ENCODE measurements at regions of chr14 and their contacts with region 1.

Region 1: GRCh38 chr14:93033983-93034670 is 81.6 kb downstream of the ITPK1 start:
- DNase-seq: peak; percentile 68
- ATAC-seq: peak; percentile 69
- H3K4me3 ChIP-seq: peak overlapping the region in 2 of 5 experiments; percentile 12 to 36
- H3K4me3 Mint-ChIP-seq: peak overlapping the region; percentile 76
- H3K27ac ChIP-seq: peak overlapping the region; percentile 61 to 84
- H3K27ac Mint-ChIP-seq: peak overlapping the region; percentile 90
- H3K4me1 ChIP-seq: peaks cover 34 to 64% of the 10 kb centered on the region in 2 donors
- H3K4me1 Mint-ChIP-seq: peaks cover 58% of the 10 kb centered on the region
- H3K27me3 ChIP-seq: no peaks in the 10 kb centered on the region
- H3K27me3 Mint-ChIP-seq: no peaks in the 10 kb centered on the region
- CTCF ChIP-seq: peak; percentile 68

Region 2: DNA sequence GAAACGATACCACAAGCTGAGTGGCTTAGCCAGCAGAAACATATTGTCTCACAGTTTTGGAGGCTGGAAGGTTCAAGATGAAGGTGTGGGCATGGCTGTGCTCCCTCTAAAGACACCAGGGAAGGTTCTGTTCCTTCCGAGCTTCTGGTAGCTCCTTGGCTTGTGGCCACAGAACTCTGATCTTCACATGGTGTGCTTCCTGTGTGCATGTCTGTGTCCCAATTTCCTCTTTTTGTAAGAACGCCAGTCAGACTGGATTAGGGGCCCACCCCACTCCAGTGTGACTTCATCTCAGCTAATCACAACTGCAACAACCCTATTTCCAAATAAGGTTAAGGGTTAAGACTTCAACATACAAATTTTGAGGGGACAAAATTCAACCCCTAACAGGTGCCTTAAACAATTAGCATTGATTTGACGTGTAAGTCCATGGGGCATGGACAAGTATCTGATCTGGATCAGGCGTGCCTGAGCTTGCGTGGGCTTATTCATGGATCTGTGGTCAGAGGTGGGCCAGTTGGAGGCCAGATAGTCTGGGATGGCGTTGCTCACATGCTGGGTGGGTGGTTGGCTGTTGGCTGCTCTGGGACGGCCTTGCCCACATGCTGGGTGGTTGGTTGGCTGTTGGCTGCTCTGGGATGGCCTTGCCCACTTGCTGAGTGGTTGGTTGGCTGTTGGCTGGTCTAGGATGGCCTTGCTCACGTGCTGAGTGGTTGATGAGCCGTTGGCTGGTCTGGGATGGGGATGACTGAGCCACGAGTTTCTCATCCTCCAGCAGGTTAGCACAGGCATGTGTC is 374.2 kb before region 1 on chr14:
- CTCF ChIA-PET with region 1: no interaction called
- POLR2A ChIA-PET with region 1: no interaction called
- intact Hi-C with region 1: no loop called
- DNase-seq: peak; percentile 69
- ATAC-seq: peak; percentile 69
- H3K4me3 ChIP-seq: no peak overlapping the region
- H3K4me3 Mint-ChIP-seq: peak overlapping the region; percentile 79
- H3K27ac ChIP-seq: peak overlapping the region; percentile 30 to 78
- H3K27ac Mint-ChIP-seq: peak overlapping the region; percentile 76
- H3K4me1 ChIP-seq: peaks cover 65 to 90% of the 10 kb centered on the region in 2 donors
- H3K4me1 Mint-ChIP-seq: peaks cover 89% of the 10 kb centered on the region
- H3K27me3 ChIP-seq: no peaks in the 10 kb centered on the region
- H3K27me3 Mint-ChIP-seq: no peaks in the 10 kb centered on the region
- CTCF ChIP-seq: no peak

Region 3: DNA sequence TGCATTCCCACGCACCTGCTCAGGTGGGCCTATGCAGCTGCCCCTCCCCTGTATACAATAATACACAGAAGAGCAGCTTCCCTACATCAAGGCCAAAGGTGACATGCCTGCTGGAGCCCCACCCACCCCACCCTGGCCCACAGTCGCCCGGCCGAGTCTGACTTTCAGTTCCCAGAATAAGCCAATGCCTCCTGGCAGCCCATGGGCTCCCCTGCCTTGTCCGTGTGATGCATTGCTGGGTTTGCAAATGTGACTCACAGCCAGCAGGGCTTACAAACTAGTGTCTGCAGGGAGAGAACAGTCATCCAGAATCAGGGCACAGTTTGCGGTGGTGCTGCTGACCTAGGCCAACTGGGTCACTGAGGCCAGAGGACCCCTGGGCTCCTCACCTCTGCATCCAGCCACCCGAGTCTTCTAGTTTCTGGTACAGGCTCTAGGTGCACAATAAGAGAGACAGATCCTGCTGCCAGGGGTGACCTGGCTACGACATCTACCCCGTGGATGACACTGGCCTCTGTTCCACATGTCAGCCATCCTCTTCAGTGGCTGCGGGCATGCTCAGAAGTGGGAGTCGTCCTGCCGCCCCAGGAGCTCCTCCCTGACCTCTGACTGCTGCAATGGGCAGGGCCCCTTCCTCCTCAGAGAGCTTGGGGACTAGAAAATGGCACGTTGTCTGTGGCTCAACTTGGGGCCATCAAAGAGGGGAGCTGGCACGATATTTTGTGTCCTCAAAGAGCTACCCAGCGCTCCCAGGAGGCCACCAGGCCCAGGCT is 26.7 kb before region 1 on chr14:
- CTCF ChIA-PET with region 1: interaction called, 3 read pairs
- POLR2A ChIA-PET with region 1: no interaction called
- intact Hi-C with region 1: loop called (anchors 1 kb)
- DNase-seq: peak; percentile 55
- ATAC-seq: peak; percentile 91
- H3K4me3 ChIP-seq: no peak overlapping the region
- H3K4me3 Mint-ChIP-seq: peak overlapping the region; percentile 65
- H3K27ac ChIP-seq: peak overlapping the region; percentile 18 to 42
- H3K27ac Mint-ChIP-seq: peak overlapping the region; percentile 91
- H3K4me1 ChIP-seq: peaks cover 20 to 30% of the 10 kb centered on the region in 2 donors
- H3K4me1 Mint-ChIP-seq: peaks cover 34% of the 10 kb centered on the region
- H3K27me3 ChIP-seq: no peaks in the 10 kb centered on the region
- H3K27me3 Mint-ChIP-seq: no peaks in the 10 kb centered on the region
- CTCF ChIP-seq: no peak

Region 4: DNA sequence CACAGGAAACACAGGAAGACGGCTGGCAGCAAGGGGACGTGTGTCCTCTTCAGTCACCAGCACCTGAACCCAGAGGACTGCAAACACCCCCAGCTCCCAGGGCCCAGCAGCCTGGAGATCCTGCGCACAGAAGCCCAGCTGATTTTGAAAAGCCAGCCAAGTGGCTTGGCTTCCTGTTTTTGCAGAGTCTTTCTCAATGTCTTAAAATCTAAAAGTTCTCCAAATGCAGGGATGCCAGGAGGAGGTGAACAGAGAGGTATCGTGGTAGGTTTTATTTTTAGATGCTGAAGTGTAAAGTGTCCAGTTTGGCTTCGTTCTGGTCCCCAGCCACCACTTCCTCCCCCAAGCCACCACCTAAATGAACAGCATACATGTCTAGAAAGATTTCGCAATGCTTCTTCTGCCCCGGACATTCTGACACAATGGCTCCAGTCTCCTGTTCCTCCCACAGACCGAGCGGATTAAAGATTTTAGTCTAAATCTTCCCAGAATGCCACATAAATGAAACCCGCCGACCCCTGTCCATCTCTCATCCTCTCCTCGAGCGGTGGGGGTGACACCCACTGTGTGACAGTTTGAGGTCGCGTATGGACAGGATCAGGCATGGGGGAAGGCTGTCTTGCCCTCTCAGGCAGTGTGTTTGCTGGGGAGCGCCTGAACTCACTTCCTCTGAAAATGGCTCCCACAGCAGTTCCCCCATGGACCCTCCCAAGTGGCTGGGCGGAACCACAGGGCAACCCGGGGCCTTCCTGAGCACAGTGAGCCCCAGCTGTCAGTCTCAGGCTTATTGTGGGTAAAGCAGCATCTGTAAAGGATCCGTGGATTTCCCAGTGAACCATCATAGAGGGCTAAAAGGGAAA is 40.0 kb after region 1 on chr14:
- CTCF ChIA-PET with region 1: interaction called, 8 read pairs
- POLR2A ChIA-PET with region 1: no interaction called
- intact Hi-C with region 1: loop called (anchors 2 kb)
- DNase-seq: peak; percentile 33
- ATAC-seq: peak; percentile 60
- H3K4me3 ChIP-seq: peak overlapping the region; percentile 12 to 58 (median 30)
- H3K4me3 Mint-ChIP-seq: peak overlapping the region; percentile 87
- H3K27ac ChIP-seq: peak overlapping the region; percentile 56 to 65
- H3K27ac Mint-ChIP-seq: peak overlapping the region; percentile 92
- H3K4me1 ChIP-seq: peaks cover 30 to 50% of the 10 kb centered on the region in 2 donors
- H3K4me1 Mint-ChIP-seq: peaks cover 53% of the 10 kb centered on the region
- H3K27me3 ChIP-seq: no peaks in the 10 kb centered on the region
- H3K27me3 Mint-ChIP-seq: no peaks in the 10 kb centered on the region
- CTCF ChIP-seq: no peak

Region 5: DNA sequence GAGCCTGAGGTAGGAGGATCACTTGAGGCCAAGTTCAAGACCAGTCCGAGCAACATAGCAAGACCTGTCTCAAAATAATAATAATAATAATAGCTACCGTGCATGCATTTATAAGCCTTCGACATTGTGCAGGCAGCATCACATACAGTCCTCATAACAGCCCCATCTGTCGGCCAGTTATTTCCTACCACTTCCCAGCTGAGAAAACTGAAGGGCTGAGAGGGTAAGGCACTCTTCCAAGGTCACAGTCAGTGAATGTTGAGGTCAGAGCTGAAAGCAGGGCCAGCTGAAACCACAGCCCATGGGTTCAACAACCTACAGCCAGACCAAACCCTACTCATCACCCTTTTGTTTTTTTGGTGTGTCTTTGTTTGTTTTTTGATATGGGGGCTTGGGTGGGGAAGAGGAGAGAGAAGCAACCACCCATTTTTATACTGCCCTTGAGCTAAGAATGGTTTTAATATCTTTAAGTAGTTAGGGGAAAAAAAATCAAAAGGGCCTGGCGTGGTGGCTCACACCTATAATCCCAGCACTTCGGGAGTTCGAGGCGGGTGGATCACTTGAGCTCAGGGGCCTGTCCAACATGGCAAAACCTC is 98.4 kb after region 1 on chr14:
- CTCF ChIA-PET with region 1: interaction called, 17 read pairs
- POLR2A ChIA-PET with region 1: interaction called, 4 read pairs
- intact Hi-C with region 1: no loop called
- DNase-seq: peak; percentile 46
- ATAC-seq: peak; percentile 54
- H3K4me3 ChIP-seq: no peak overlapping the region
- H3K4me3 Mint-ChIP-seq: no peak overlapping the region
- H3K27ac ChIP-seq: no peak overlapping the region
- H3K27ac Mint-ChIP-seq: no peak overlapping the region
- H3K4me1 ChIP-seq: no peaks in the 10 kb centered on the region
- H3K4me1 Mint-ChIP-seq: no peaks in the 10 kb centered on the region
- H3K27me3 ChIP-seq: peaks cover 0 to 4% (median 0%) of the 10 kb centered on the region in 4 experiments
- H3K27me3 Mint-ChIP-seq: no peaks in the 10 kb centered on the region
- CTCF ChIP-seq: peak; percentile 38

Region 6: DNA sequence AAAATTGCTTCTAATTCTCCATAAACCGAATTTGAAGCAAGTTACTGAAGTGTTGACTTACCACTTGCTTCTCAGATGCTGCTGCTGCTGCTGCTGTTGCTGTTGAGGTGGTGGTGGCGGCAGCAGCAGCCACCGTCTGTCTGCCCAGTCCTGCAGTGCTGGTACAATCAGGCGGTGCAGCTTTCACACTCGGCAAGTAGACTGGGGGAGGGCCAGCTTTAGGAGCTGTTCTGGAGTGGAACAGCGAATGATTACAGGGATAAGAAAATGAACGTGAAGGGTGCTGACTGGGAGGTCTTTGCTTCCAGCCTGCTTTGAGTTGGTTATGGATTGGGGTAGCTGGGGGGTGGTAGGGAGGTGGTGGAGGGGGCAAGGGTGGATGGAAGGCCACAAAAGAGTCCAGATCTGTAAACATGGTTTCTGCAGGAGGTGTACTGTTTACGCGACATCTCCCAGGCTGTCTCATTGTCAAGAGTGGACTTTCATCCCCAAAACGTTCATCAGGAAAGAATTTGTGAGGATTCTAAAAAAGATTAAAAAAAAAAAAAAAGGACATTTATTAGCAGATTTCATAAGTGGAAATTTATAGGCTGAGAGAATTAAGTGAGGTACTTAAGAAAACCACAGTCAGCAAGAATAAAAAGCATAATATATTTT is 211.8 kb after region 1 on chr14:
- CTCF ChIA-PET with region 1: no interaction called
- POLR2A ChIA-PET with region 1: no interaction called
- intact Hi-C with region 1: no loop called
- DNase-seq: no peak
- ATAC-seq: no peak
- H3K4me3 ChIP-seq: no peak overlapping the region
- H3K4me3 Mint-ChIP-seq: no peak overlapping the region
- H3K27ac ChIP-seq: no peak overlapping the region
- H3K27ac Mint-ChIP-seq: no peak overlapping the region
- H3K4me1 ChIP-seq: peaks cover 0 to 5% of the 10 kb centered on the region in 2 donors
- H3K4me1 Mint-ChIP-seq: peaks cover 3% of the 10 kb centered on the region
- H3K27me3 ChIP-seq: no peaks in the 10 kb centered on the region
- H3K27me3 Mint-ChIP-seq: no peaks in the 10 kb centered on the region
- CTCF ChIP-seq: no peak